CD8-positive, alpha-beta T cell (primary cell): ENCODE measurements at regions of chr1 and their contacts with region 1.

Region 1: DNA sequence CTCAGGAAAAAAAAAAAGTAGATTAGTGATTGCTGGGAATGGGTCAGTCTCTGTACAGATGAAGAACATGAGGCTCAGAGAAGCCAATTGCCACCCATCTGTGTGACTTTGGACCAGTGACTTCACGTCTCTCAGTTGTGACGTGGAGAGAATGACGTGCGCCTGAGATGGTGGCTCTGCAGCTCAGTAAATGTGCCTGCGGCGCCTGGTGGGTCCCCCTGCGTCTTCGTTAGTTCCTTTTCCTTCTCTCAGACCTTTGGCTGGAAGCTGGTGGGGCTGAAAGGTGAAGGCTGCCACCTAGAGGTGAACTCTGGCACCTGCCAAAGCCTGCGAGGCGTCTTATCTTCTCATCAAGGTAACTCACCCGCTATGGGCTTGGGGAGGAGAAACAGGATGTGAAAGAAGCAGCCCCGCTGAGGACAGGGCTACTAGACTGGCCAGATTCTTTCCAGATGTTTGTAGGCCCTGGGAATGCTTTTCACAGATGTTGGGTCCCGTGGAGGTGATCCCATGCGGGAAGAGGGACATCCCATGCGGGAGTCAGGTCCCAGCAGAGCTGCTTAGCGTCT is 8.7 kb upstream of the E2F2 start:
- DNase-seq: peak; percentile 82 to 95 (median 92)
- ATAC-seq: peak; percentile 96
- H3K4me3 ChIP-seq: no peak overlapping the region
- H3K4me3 Mint-ChIP-seq: peak overlapping the region; percentile 23
- H3K27ac ChIP-seq: no peak overlapping the region
- H3K27ac Mint-ChIP-seq: peak overlapping the region; percentile 74
- H3K4me1 ChIP-seq: peaks cover 3% of the 10 kb centered on the region
- H3K4me1 Mint-ChIP-seq: peaks cover 15% of the 10 kb centered on the region
- H3K27me3 ChIP-seq: no peaks in the 10 kb centered on the region
- H3K27me3 Mint-ChIP-seq: no peaks in the 10 kb centered on the region
- CTCF ChIP-seq: peak; percentile 74

Region 2: DNA sequence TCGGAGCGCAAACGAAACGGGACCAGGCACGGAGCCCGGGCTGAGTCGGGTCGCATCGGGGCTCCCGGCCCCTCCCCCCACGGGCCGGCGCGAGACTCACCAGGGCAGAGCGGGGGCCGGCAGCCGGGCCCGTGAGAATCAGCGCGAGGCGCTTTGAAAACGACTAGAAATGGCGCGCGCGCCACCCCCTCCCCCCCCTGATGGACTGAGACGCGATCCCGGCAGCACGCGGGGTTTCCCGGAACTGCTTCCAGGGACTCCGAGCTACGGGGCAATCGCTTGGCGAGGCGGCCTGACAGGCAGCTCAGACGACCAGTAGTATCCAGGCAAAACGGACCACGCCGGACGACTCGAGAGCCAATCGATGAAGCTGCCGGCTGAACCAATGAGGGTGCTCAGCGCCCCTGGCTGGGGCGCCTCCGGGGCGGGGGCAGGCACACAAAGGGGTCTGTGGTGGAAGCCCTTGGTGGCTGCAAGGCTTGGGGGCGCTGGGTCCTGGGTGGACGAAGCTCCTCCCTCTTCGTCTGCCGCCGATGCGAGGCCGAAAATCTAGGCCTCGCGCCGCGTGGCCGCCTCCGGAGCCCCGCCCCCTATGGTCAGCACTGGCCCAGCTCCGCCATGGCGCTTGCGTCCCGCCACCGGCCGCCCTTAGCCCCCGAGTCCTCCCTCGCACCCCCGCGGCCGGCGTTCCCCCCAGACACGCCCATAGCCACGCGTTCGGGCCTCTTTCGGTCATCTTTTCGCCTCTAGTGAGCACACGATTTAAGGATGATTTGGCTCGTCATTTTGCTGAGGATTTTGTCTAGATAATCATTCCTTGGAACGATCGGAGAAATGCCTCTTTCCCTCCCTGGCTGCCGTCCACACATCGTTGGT is 195.4 kb before region 1 on chr1 and contains the start of gene HNRNPR:
- CTCF ChIA-PET with region 1: no interaction called
- POLR2A ChIA-PET with region 1: no interaction called
- intact Hi-C with region 1: loop called in 1 of 2 experiments (anchors 10 kb)
- DNase-seq: peak; percentile 97 to 100 (median 99)
- ATAC-seq: peak; percentile 96
- H3K4me3 ChIP-seq: peak within 1 kb of the TSS; percentile 70 to 93
- H3K4me3 Mint-ChIP-seq: peak within 1 kb of the TSS; percentile 94
- H3K27ac ChIP-seq: peak within 1 kb of the TSS; percentile 66 to 78
- H3K27ac Mint-ChIP-seq: peak within 1 kb of the TSS; percentile 96
- H3K4me1 ChIP-seq: peaks cover 31% of the 10 kb centered on the region
- H3K4me1 Mint-ChIP-seq: peaks cover 42% of the 10 kb centered on the region
- H3K27me3 ChIP-seq: no peaks in the 10 kb centered on the region
- H3K27me3 Mint-ChIP-seq: no peaks in the 10 kb centered on the region
- CTCF ChIP-seq: no peak
- total RNA-seq, gene HNRNPR: 102 to 103 TPM

Region 3: DNA sequence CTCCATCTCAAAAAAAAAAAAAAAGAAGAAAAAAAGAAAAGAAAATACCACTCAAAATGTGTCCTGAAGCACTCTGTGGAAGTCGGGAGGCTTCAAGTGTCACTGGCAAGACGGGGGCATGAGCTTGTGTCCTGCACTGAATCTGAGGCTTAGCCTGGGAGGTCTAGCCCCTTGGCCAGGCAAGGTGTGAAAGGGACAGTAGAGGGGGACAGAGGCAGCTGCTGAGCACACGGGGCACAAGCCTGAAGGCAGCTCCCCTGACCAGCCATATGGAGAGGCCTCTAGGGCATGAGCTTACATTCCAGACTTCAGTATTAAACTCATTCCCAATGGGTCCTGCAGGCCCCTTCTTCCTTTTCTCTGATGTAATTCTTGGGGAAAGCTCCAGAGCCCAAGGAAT is 32.3 kb before region 1 on chr1:
- CTCF ChIA-PET with region 1: interaction called, 353 read pairs
- POLR2A ChIA-PET with region 1: no interaction called
- intact Hi-C with region 1: no loop called
- DNase-seq: no peak
- ATAC-seq: no peak
- H3K4me3 ChIP-seq: no peak overlapping the region
- H3K4me3 Mint-ChIP-seq: no peak overlapping the region
- H3K27ac ChIP-seq: no peak overlapping the region
- H3K27ac Mint-ChIP-seq: no peak overlapping the region
- H3K4me1 ChIP-seq: no peaks in the 10 kb centered on the region
- H3K4me1 Mint-ChIP-seq: no peaks in the 10 kb centered on the region
- H3K27me3 ChIP-seq: no peaks in the 10 kb centered on the region
- H3K27me3 Mint-ChIP-seq: no peaks in the 10 kb centered on the region
- CTCF ChIP-seq: no peak

Region 4: DNA sequence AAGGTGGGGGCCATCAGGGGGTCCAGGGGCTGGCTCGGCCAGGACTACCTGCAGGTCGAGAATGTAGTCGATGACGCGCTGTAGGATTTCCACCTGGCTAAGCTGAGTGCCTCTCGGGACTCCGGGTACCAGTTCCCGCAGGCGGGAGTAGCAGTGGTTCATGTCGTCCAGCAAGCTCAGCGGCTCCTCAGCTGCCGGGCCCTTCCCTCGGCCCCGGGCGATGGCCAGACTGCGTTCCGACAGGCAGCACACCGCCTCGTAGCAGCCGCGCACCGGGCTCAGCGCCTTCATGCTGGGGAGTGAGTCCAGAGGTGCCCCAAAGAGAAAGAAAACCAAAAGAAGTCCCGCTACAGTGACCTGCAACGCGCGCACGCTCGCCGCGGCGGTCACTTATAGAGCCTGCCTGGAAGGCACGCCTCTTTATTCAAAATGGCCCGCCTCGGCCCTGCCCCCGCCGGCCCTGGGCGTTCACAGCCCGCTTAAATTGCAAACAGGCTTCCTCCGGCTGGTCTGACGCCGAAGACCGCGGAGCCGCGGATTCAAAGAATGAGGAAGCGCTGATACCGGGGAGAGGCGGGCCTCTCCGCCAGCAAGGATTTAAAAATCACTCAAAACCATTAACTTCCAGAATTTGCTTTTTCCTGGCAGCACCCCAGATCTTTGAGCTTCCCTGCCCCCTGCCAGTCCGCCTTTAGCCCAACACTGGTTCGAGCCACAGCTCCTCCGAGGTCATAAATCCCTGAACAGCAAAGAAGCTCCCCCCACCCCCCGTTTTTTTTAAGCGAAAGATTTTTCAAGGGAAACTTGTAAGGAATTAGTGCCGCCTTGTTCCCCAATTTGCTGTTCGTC is 19.6 kb after region 1 on chr1 and contains the start of gene ID3:
- CTCF ChIA-PET with region 1: interaction called, 52 read pairs
- POLR2A ChIA-PET with region 1: interaction called, 21 read pairs
- intact Hi-C with region 1: loop called in 1 of 2 experiments (anchors 2 kb)
- DNase-seq: peak; percentile 83 to 96 (median 91)
- ATAC-seq: peak; percentile 57
- H3K4me3 ChIP-seq: peak within 1 kb of the TSS; percentile 82 to 96
- H3K4me3 Mint-ChIP-seq: peak within 1 kb of the TSS; percentile 81
- H3K27ac ChIP-seq: peak within 1 kb of the TSS; percentile 50 to 83
- H3K27ac Mint-ChIP-seq: peak within 1 kb of the TSS; percentile 99
- H3K4me1 ChIP-seq: peaks cover 54% of the 10 kb centered on the region
- H3K4me1 Mint-ChIP-seq: peaks cover 61% of the 10 kb centered on the region
- H3K27me3 ChIP-seq: no peaks in the 10 kb centered on the region
- H3K27me3 Mint-ChIP-seq: no peaks in the 10 kb centered on the region
- CTCF ChIP-seq: no peak
- total RNA-seq, gene ID3: 44.2 to 48.1 TPM

Region 5: DNA sequence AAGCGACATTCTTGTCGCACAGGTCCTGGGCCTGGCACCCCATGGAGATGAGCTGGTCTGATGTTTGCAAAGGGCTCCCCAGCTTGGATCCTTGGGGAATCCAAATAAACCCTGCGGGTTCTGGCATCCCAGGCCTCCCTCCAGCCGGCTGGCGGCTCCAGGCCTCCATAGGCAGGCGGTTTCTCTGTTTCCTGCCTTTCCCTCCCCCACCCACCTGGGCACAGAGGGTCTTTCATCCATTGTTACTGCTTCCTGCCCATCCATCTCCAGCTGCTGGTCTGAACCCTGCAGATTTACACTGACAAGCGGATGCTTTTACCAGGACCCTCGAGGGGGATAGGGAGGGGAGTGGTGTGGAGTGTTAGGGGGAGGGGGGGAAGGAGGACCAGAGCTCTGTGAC is 58.6 kb after region 1 on chr1:
- CTCF ChIA-PET with region 1: interaction called, 24 read pairs
- POLR2A ChIA-PET with region 1: interaction called, 3 read pairs
- intact Hi-C with region 1: no loop called
- DNase-seq: no peak
- ATAC-seq: no peak
- H3K4me3 ChIP-seq: peak overlapping the region in 1 of 2 experiments; percentile 1
- H3K4me3 Mint-ChIP-seq: no peak overlapping the region
- H3K27ac ChIP-seq: peak overlapping the region in 1 of 2 experiments; percentile 53
- H3K27ac Mint-ChIP-seq: no peak overlapping the region
- H3K4me1 ChIP-seq: peaks cover 94% of the 10 kb centered on the region
- H3K4me1 Mint-ChIP-seq: peaks cover 93% of the 10 kb centered on the region
- H3K27me3 ChIP-seq: no peaks in the 10 kb centered on the region
- H3K27me3 Mint-ChIP-seq: no peaks in the 10 kb centered on the region
- CTCF ChIP-seq: no peak

Region 6: GRCh38 chr1:23627069-23627735 is 87.4 kb after region 1 on chr1:
- CTCF ChIA-PET with region 1: interaction called, 1,167 read pairs
- POLR2A ChIA-PET with region 1: interaction called, 4 read pairs
- intact Hi-C with region 1: no loop called
- DNase-seq: peak in 5 of 9 experiments; percentile 29 to 63 (median 40)
- ATAC-seq: peak; percentile 69
- H3K4me3 ChIP-seq: peak overlapping the region; percentile 21 to 58
- H3K4me3 Mint-ChIP-seq: peak overlapping the region; percentile 84
- H3K27ac ChIP-seq: peak overlapping the region in 1 of 2 experiments; percentile 53
- H3K27ac Mint-ChIP-seq: peak overlapping the region; percentile 91
- H3K4me1 ChIP-seq: peaks cover 56% of the 10 kb centered on the region
- H3K4me1 Mint-ChIP-seq: peaks cover 64% of the 10 kb centered on the region
- H3K27me3 ChIP-seq: no peaks in the 10 kb centered on the region
- H3K27me3 Mint-ChIP-seq: no peaks in the 10 kb centered on the region
- CTCF ChIP-seq: no peak

Region 7: GRCh38 chr1:23751050-23751814 is 211.4 kb after region 1 on chr1:
- CTCF ChIA-PET with region 1: no interaction called
- POLR2A ChIA-PET with region 1: no interaction called
- intact Hi-C with region 1: loop called in 1 of 2 experiments (anchors 2 kb)
- DNase-seq: peak in 4 of 9 experiments; percentile 22 to 53 (median 40)
- ATAC-seq: peak; percentile 59
- H3K4me3 ChIP-seq: no peak overlapping the region
- H3K4me3 Mint-ChIP-seq: no peak overlapping the region
- H3K27ac ChIP-seq: no peak overlapping the region
- H3K27ac Mint-ChIP-seq: peak overlapping the region; percentile 42
- H3K4me1 ChIP-seq: peaks cover 8% of the 10 kb centered on the region
- H3K4me1 Mint-ChIP-seq: peaks cover 32% of the 10 kb centered on the region
- H3K27me3 ChIP-seq: no peaks in the 10 kb centered on the region
- H3K27me3 Mint-ChIP-seq: no peaks in the 10 kb centered on the region
- CTCF ChIP-seq: peak; percentile 50